ENCODE measurements at regions of chr7 and their contacts with region 1.

Region 1: DNA sequence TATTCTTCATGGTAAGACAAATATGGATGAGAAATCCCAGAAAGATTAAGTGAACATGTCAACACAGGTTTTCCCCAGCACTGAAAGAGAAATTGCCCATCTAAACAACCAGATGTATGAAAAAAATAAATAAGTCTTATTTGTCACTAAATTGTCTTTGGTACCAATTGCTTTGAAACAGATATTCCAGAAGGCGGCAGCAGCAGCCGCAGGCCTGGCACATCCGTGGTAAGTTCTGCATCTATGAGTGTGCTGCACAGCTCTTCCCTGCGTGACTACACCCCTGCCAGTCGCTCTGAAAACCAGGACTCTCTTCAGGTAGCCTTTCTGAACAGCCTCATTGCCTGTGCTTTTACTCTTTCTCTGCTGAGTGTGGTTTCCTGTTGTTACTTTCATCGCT is 49.7 kb upstream of the GATAD1 start:
- DNase-seq: no peak
- H3K4me3 ChIP-seq: no peak overlapping the region
- H3K27me3 ChIP-seq: no peaks in the 10 kb centered on the region
- CTCF ChIP-seq: no peak

Region 2: GRCh38 chr7:92071032-92071431 is 326.5 kb before region 1 on chr7:
- CTCF ChIA-PET with region 1: no interaction called
- POLR2A ChIA-PET with region 1: interaction called, 22 read pairs
- DNase-seq: no peak
- H3K4me3 ChIP-seq: no peak overlapping the region
- H3K27me3 ChIP-seq: no peaks in the 10 kb centered on the region
- CTCF ChIP-seq: no peak

Region 3: DNA sequence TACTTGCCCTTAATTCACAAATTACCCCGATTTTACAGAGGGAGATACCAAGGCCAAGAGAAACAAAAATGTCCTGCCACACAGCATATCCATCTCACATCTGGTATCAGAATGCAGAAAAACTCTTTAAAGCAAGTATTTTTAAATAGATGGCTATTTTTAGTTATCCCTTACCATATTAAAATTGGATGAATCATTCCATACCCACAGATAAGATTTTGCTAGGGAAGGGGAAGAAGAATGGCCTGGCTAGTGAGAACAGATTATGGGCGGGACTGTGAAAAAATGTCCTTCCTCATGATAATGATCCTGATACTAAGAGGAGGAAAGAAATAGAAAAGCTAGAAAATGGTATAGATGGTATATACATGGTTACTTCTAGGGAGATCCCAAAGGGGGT is 30.8 kb before region 1 on chr7:
- CTCF ChIA-PET with region 1: no interaction called
- POLR2A ChIA-PET with region 1: no interaction called
- DNase-seq: peak; percentile 21
- H3K4me3 ChIP-seq: no peak overlapping the region
- H3K27me3 ChIP-seq: no peaks in the 10 kb centered on the region
- CTCF ChIP-seq: no peak

Region 4: GRCh38 chr7:92415225-92415624 is 17.7 kb after region 1 on chr7:
- CTCF ChIA-PET with region 1: no interaction called
- POLR2A ChIA-PET with region 1: no interaction called
- DNase-seq: no peak
- H3K4me3 ChIP-seq: no peak overlapping the region
- H3K27me3 ChIP-seq: peaks cover 7% of the 10 kb centered on the region
- CTCF ChIP-seq: no peak

Measured in BJ (cell line).